Mammary epithelial cell (primary cell): ENCODE measurements at regions of chr14 and their contacts with region 1.

Region 1: GRCh38 chr14:104968153-104968527 is 10.0 kb downstream of the AHNAK2 start:
- DNase-seq: peak; percentile 79
- H3K4me3 ChIP-seq: peak overlapping the region; percentile 1 to 43 (median 24)
- H3K27ac ChIP-seq: peak overlapping the region; percentile 98
- H3K4me1 ChIP-seq: peaks cover 70% of the 10 kb centered on the region
- H3K27me3 ChIP-seq: no peaks in the 10 kb centered on the region
- CTCF ChIP-seq: no peak

Region 2: DNA sequence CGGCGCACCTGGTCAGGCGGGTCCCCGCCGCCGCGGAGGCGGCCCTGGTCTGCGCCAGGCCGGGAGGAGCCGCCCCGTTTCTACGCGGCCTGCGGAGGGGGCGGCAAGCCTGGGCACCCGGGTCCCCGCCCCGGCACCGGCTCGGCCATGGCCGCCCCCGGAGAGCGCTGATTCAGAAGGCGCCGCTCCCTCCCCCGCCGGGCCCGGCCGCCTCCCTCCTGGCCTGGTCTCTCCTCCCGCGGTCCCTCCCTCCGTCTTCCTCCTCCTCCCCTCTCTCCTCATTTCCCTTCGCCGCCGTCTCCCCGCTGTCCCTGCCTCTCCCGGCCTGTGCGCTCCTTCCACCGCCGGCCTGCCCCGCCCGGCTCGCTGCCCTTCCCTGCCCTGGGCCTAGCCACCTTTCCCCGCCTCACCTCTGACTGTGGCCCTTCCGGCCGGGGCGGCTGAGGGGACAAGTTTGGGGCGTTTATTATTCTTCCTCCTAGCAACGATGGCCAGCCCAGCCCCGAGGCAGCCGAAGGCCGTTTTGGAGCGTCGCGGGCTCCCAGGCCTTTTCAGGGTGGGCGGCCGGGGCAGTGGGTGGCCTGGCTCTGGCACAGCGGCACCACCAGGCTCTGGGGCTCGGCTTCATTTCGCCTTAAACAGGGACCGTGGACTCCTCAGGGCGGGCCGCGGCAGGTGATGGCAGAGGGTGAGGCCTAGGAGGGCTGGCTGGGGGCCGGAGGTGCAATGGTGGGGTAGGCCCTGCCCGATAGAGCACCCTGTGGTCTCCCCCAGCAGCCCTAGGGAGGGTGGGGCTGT is 102.3 kb before region 1 on chr14:
- CTCF ChIA-PET with region 1: no interaction called
- dilution Hi-C with region 1: no loop called
- in situ Hi-C with region 1: no loop called
- intact Hi-C with region 1: loop called (anchors 1 kb)
- DNase-seq: peak; percentile 81
- H3K4me3 ChIP-seq: peak overlapping the region; percentile 85 to 86 (median 85)
- H3K27ac ChIP-seq: peak overlapping the region; percentile 69
- H3K4me1 ChIP-seq: peaks cover 29% of the 10 kb centered on the region
- H3K27me3 ChIP-seq: no peaks in the 10 kb centered on the region
- CTCF ChIP-seq: no peak

Region 3: GRCh38 chr14:104895786-104896661 is 72.1 kb before region 1 on chr14:
- CTCF ChIA-PET with region 1: no interaction called
- dilution Hi-C with region 1: no loop called
- in situ Hi-C with region 1: no loop called
- intact Hi-C with region 1: loop called (anchors 1 kb)
- DNase-seq: no peak
- H3K4me3 ChIP-seq: no peak overlapping the region
- H3K27ac ChIP-seq: no peak overlapping the region
- H3K4me1 ChIP-seq: peaks cover 11% of the 10 kb centered on the region
- H3K27me3 ChIP-seq: no peaks in the 10 kb centered on the region
- CTCF ChIP-seq: no peak